A673 (cell line): ENCODE measurements at regions of chr17 and their contacts with region 1.

Region 1: DNA sequence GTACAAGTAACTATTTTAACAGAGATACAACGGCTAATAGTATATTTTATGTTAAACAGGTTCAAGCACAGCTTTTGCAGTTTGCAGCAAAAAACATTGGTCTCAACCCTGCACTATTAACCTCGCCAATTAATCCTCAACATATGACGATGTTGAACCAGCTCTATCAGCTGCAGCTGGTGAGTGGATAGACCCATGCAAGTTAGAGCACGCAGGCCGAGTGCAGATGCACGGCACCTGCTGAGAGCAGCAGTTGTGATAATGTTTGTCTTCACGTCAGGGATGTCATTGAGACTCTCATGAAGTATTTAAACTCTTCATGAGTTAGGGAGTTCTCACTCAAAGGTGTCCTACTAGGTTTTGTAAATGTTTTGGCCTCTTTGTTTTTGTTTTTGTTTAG is 45.6 kb downstream of the TMC6 start:
- DNase-seq: no peak
- H3K4me3 ChIP-seq: no peak overlapping the region
- H3K27ac ChIP-seq: no peak overlapping the region
- H3K4me1 ChIP-seq: no peaks in the 10 kb centered on the region
- H3K27me3 ChIP-seq: no peaks in the 10 kb centered on the region
- CTCF ChIP-seq: no peak

Region 2: GRCh38 chr17:78557598-78558039 is 474.6 kb after region 1 on chr17:
- CTCF ChIA-PET with region 1: interaction called, 14 read pairs
- POLR2A ChIA-PET with region 1: no interaction called
- intact Hi-C with region 1: no loop called
- DNase-seq: peak; percentile 79
- H3K4me3 ChIP-seq: no peak overlapping the region
- H3K27ac ChIP-seq: no peak overlapping the region
- H3K4me1 ChIP-seq: peaks cover 9% of the 10 kb centered on the region
- H3K27me3 ChIP-seq: no peaks in the 10 kb centered on the region
- CTCF ChIP-seq: no peak